T-cell (primary cell): ENCODE measurements at regions of chr1 and their contacts with region 1.

Region 1: GRCh38 chr1:9494929-9495758 is 44.1 kb upstream of the SLC25A33 start:
- DNase-seq: peak; percentile 9 to 81 (median 53)
- ATAC-seq: peak; percentile 82 to 89 (median 87)
- H3K4me3 ChIP-seq: peak overlapping the region; percentile 35 to 53
- H3K4me3 Mint-ChIP-seq: peak overlapping the region; percentile 48 to 64 (median 59)
- H3K27ac ChIP-seq: no peak overlapping the region
- H3K27ac Mint-ChIP-seq: no peak overlapping the region
- H3K4me1 ChIP-seq: peaks cover 0 to 9% of the 10 kb centered on the region in 2 experiments
- H3K4me1 Mint-ChIP-seq: peaks cover 3 to 12% (median 6%) of the 10 kb centered on the region in 3 donors
- H3K27me3 ChIP-seq: peaks cover 0 to 29% of the 10 kb centered on the region in 2 experiments
- H3K27me3 Mint-ChIP-seq: peaks cover 0 to 14% of the 10 kb centered on the region in 2 donors

Region 2: GRCh38 chr1:9225468-9225785 is 269.7 kb before region 1 on chr1:
- CTCF ChIA-PET with region 1: no interaction called
- POLR2A ChIA-PET with region 1: no interaction called
- DNase-seq: no peak
- ATAC-seq: no peak
- H3K4me3 ChIP-seq: no peak overlapping the region
- H3K4me3 Mint-ChIP-seq: no peak overlapping the region
- H3K27ac ChIP-seq: no peak overlapping the region
- H3K27ac Mint-ChIP-seq: no peak overlapping the region
- H3K4me1 ChIP-seq: no peaks in the 10 kb centered on the region
- H3K4me1 Mint-ChIP-seq: no peaks in the 10 kb centered on the region
- H3K27me3 ChIP-seq: peaks cover 0 to 20% of the 10 kb centered on the region in 2 experiments
- H3K27me3 Mint-ChIP-seq: no peaks in the 10 kb centered on the region

Region 3: GRCh38 chr1:9289090-9289534 is 206.0 kb before region 1 on chr1:
- CTCF ChIA-PET with region 1: interaction called, 3 to 16 read pairs
- POLR2A ChIA-PET with region 1: no interaction called
- DNase-seq: peak; percentile 43 to 90 (median 78)
- ATAC-seq: no peak
- H3K4me3 ChIP-seq: no peak overlapping the region
- H3K4me3 Mint-ChIP-seq: no peak overlapping the region
- H3K27ac ChIP-seq: no peak overlapping the region
- H3K27ac Mint-ChIP-seq: no peak overlapping the region
- H3K4me1 ChIP-seq: peaks cover 9 to 16% of the 10 kb centered on the region in 2 experiments
- H3K4me1 Mint-ChIP-seq: peaks cover 20 to 37% (median 21%) of the 10 kb centered on the region in 3 donors
- H3K27me3 ChIP-seq: peaks cover 0 to under 1% of the 10 kb centered on the region in 2 experiments
- H3K27me3 Mint-ChIP-seq: no peaks in the 10 kb centered on the region

Region 4: GRCh38 chr1:9473032-9473792 is 21.9 kb before region 1 on chr1:
- CTCF ChIA-PET with region 1: no interaction called
- POLR2A ChIA-PET with region 1: no interaction called
- DNase-seq: no peak
- ATAC-seq: no peak
- H3K4me3 ChIP-seq: no peak overlapping the region
- H3K4me3 Mint-ChIP-seq: no peak overlapping the region
- H3K27ac ChIP-seq: no peak overlapping the region
- H3K27ac Mint-ChIP-seq: no peak overlapping the region
- H3K4me1 ChIP-seq: no peaks in the 10 kb centered on the region
- H3K4me1 Mint-ChIP-seq: no peaks in the 10 kb centered on the region
- H3K27me3 ChIP-seq: peaks cover 0 to 57% of the 10 kb centered on the region in 2 experiments
- H3K27me3 Mint-ChIP-seq: peaks cover 5 to 9% of the 10 kb centered on the region in 2 donors

Region 5: GRCh38 chr1:9573723-9574122 is 78.6 kb after region 1 on chr1:
- CTCF ChIA-PET with region 1: interaction called, 5 to 10 read pairs
- POLR2A ChIA-PET with region 1: no interaction called
- DNase-seq: peak in 1 of 35 experiments; percentile 40
- ATAC-seq: peak in 1 of 4 experiments; percentile 46
- H3K4me3 ChIP-seq: no peak overlapping the region
- H3K4me3 Mint-ChIP-seq: no peak overlapping the region
- H3K27ac ChIP-seq: no peak overlapping the region
- H3K27ac Mint-ChIP-seq: no peak overlapping the region
- H3K4me1 ChIP-seq: no peaks in the 10 kb centered on the region
- H3K4me1 Mint-ChIP-seq: no peaks in the 10 kb centered on the region
- H3K27me3 ChIP-seq: no peaks in the 10 kb centered on the region
- H3K27me3 Mint-ChIP-seq: no peaks in the 10 kb centered on the region